ENCODE measurements at regions of chr5 and their contacts with region 1.

Region 1: DNA sequence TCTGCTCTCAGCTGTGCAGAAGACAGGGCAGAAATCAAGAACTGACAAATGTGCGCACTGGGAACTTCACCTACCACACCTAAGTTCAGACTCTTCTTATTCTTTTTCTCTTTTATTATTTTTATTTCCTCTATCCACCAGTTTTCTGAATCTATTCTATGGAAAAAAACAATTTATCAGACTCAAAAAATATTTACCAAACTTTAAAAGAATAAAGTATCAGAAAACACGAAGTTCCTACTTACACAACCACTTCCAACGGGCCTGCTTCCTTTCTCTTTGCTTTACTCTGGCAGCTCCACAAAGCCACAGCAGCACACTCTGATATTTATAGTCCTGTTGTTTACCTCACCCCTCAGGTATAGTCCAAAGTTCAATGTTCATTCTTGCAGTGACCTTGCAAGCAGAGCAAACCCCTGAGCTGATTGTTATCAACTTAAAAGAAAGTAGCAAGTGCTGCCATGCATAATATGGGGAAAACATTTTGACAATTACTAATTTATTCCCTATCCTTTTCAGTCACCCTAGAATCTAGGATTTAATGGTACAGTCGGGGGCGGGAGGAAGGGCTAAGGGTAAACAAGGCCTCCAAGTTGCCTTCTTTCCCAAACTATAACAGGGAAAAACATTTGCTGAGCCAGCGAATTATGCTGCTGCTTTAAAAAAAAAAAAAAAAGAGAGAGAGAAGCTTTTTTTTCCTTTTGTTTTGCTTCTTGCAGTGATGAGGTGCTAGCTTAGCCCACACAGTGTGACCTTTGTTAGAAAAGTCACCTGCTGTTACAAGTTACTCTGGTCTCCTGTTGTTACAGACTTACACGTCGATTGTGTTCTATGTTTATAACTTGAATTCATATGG is at the start of gene SELENOP:
- DNase-seq: peak in 1 of 2 donors; percentile 84
- ATAC-seq: peak; percentile 92 to 97 (median 96)
- H3K4me3 ChIP-seq: peak within 1 kb of the TSS; percentile 38 to 67 (median 60)
- H3K27ac ChIP-seq: peak within 1 kb of the TSS; percentile 62 to 93 (median 84)
- H3K4me1 ChIP-seq: peaks cover 0 to 52% (median 35%) of the 10 kb centered on the region in 9 donors
- H3K27me3 ChIP-seq: no peaks in the 10 kb centered on the region
- CTCF ChIP-seq: no peak
- total RNA-seq, gene SELENOP: 149 to 373 (median 181) TPM

Region 2: DNA sequence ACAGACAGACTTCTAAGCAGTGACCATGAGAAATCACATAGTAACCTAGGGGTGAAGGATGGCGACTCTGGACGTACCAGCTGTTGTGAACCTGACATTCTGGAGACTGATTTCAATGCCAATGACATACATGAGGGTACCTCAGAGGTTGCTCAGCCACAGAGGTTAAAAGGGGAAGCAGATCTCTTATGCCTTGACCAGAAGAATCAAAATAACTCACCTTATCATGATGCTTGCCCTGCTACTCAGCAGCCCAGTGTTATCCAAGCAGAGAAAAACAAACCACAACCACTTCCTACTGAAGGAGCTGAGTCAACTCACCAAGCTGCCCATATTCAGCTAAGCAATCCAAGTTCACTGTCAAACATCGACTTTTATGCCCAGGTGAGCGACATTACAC is 93.2 kb before region 1 on chr5:
- intact Hi-C with region 1: no loop called
- DNase-seq: no peak
- ATAC-seq: no peak
- H3K4me3 ChIP-seq: no peak overlapping the region
- H3K27ac ChIP-seq: no peak overlapping the region
- H3K4me1 ChIP-seq: peaks cover 0 to 11% (median 0%) of the 10 kb centered on the region in 9 donors
- H3K27me3 ChIP-seq: no peaks in the 10 kb centered on the region
- CTCF ChIP-seq: no peak

Region 3: GRCh38 chr5:42839196-42839595 is 27.4 kb after region 1 on chr5:
- intact Hi-C with region 1: loop called in 1 of 10 experiments (anchors 1 kb)
- DNase-seq: no peak
- ATAC-seq: no peak
- H3K4me3 ChIP-seq: no peak overlapping the region
- H3K27ac ChIP-seq: peak overlapping the region in 1 of 10 donors; percentile 72
- H3K4me1 ChIP-seq: peaks cover 2 to 46% (median 29%) of the 10 kb centered on the region in 9 donors
- H3K27me3 ChIP-seq: no peaks in the 10 kb centered on the region
- CTCF ChIP-seq: no peak

Region 4: GRCh38 chr5:42876375-42876844 is 64.6 kb after region 1 on chr5:
- intact Hi-C with region 1: loop called in 4 of 10 experiments (anchors 5 to 10 kb)
- DNase-seq: no peak
- ATAC-seq: no peak
- H3K4me3 ChIP-seq: peak overlapping the region in 4 of 10 donors; percentile 4 to 42 (median 25)
- H3K27ac ChIP-seq: peak overlapping the region in 3 of 10 donors; percentile 32 to 45 (median 38)
- H3K4me1 ChIP-seq: peaks cover 0 to 22% (median 0%) of the 10 kb centered on the region in 9 donors
- H3K27me3 ChIP-seq: no peaks in the 10 kb centered on the region
- CTCF ChIP-seq: no peak

Measured in heart right ventricle (tissue), 16 donors.